Sigmoid colon (tissue), 7 donors: ENCODE measurements at regions of chr1 and their contacts with region 1.

Region 1: DNA sequence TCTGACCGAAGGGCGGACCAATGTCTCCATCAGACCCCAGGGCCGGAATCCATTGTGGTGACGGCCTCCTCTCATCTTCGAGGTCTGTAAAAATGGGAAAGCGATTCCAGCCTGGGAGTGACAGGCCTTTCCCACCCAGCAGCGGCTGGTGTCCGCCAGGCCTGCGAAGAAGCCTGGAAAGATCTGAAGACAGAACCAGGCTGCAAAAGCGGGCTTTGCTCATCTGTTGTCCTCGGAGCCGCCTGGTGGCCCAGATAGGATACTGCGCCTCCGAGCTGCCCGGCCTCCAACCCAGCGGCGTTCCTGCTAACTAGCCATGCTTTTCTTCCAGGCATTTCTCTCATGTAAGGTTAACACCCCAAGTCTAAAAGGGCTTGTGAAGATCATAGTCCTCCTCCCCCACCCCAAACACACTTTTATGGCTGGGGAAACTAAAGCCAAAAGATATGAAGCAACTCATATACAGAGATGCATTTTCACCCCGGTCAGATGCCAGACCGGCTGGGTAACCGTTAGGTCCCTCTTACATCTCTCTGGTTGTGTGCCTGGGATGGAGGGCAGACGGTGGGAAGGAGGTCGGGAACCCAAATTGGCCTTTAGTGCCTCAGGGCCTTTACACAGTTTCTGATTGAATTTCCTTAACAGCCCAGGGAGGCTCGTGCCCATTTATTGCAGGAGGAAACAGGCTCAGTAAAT is 1.9 kb upstream of the DHRS3 start:
- DNase-seq: peak; percentile 97
- H3K4me3 ChIP-seq: peak overlapping the region; percentile 70 to 92 (median 78)
- H3K27ac ChIP-seq: peak overlapping the region; percentile 90 to 99 (median 96)
- H3K4me1 ChIP-seq: peaks cover 0 to 68% (median 60%) of the 10 kb centered on the region in 4 donors
- H3K27me3 ChIP-seq: no peaks in the 10 kb centered on the region
- CTCF ChIP-seq: peak; percentile 96 to 99 (median 98)
- EP300 ChIP-seq: peak in 1 of 4 donors; percentile 16
- POLR2A ChIP-seq: peak in 1 of 2 donors; percentile 17

Region 2: GRCh38 chr1:12309783-12310742 is 309.9 kb before region 1 on chr1:
- intact Hi-C with region 1: loop called (anchors 2 kb)
- DNase-seq: peak; percentile 86
- H3K4me3 ChIP-seq: peak overlapping the region in 1 of 4 donors; percentile 2
- H3K27ac ChIP-seq: peak overlapping the region; percentile 68 to 87 (median 82)
- H3K4me1 ChIP-seq: peaks cover 0 to 25% (median 21%) of the 10 kb centered on the region in 4 donors
- H3K27me3 ChIP-seq: no peaks in the 10 kb centered on the region
- CTCF ChIP-seq: no peak
- EP300 ChIP-seq: peak in 3 of 4 donors; percentile 37 to 60 (median 45)
- POLR2A ChIP-seq: no peak

Region 3: GRCh38 chr1:12448746-12449177 is 171.2 kb before region 1 on chr1:
- intact Hi-C with region 1: loop called (anchors 5 kb)
- DNase-seq: peak; percentile 81
- H3K4me3 ChIP-seq: no peak overlapping the region
- H3K27ac ChIP-seq: peak overlapping the region; percentile 76 to 89 (median 86)
- H3K4me1 ChIP-seq: peaks cover 0 to 85% (median 77%) of the 10 kb centered on the region in 4 donors
- H3K27me3 ChIP-seq: no peaks in the 10 kb centered on the region
- CTCF ChIP-seq: no peak
- EP300 ChIP-seq: no peak
- POLR2A ChIP-seq: no peak

Region 4: DNA sequence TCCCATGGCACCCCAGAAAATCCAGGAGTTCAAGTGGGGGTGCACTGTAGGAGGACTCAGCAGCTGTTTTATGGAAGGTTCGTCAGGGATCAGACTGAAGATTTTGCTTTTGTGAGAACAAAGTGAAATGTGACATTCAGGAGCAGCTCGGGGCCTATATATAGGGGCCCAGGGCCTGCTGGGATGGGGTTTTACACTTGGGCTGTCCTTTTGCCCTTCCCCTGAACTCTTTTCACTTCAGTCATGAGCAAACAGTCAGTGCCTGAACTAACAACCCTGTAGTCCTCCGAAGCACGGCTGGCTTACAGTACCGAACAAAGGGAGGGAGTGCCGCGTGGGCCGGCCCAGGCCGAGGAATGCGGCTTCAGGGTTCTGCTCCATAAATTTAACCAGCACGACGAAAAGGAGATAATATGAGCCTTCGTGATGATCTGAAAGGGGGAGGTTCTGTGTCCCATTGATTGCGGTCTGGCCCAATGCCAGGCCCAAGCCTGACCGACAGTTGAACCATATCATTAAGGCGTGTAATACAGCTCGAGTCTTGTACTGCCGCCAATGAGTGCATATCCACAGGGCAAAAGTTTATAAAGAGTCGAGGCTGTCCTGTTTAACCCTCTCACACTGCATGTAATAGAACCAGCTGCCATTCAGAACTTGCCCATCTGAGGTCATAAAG is 141.9 kb before region 1 on chr1:
- intact Hi-C with region 1: loop called (anchors 2 kb)
- DNase-seq: peak; percentile 90
- H3K4me3 ChIP-seq: no peak overlapping the region
- H3K27ac ChIP-seq: peak overlapping the region; percentile 80 to 90 (median 85)
- H3K4me1 ChIP-seq: peaks cover 0 to 92% (median 88%) of the 10 kb centered on the region in 4 donors
- H3K27me3 ChIP-seq: no peaks in the 10 kb centered on the region
- CTCF ChIP-seq: no peak
- EP300 ChIP-seq: peak in 3 of 4 donors; percentile 23 to 59 (median 24)
- POLR2A ChIP-seq: no peak

Region 5: GRCh38 chr1:12556368-12556930 is 63.5 kb before region 1 on chr1:
- intact Hi-C with region 1: loop called (anchors 1 kb)
- DNase-seq: peak; percentile 91
- H3K4me3 ChIP-seq: no peak overlapping the region
- H3K27ac ChIP-seq: peak overlapping the region; percentile 88 to 92 (median 89)
- H3K4me1 ChIP-seq: peaks cover 0 to 68% (median 55%) of the 10 kb centered on the region in 4 donors
- H3K27me3 ChIP-seq: no peaks in the 10 kb centered on the region
- CTCF ChIP-seq: no peak
- EP300 ChIP-seq: peak; percentile 15 to 96 (median 84)
- POLR2A ChIP-seq: no peak